T-cell (primary cell): ENCODE measurements at regions of chr12 and their contacts with region 1.

Region 1: GRCh38 chr12:40921563-40922163 is 229.4 kb downstream of the CNTN1 start:
- DNase-seq: no peak
- ATAC-seq: no peak
- H3K4me3 ChIP-seq: no peak overlapping the region
- H3K4me3 Mint-ChIP-seq: no peak overlapping the region
- H3K27ac ChIP-seq: no peak overlapping the region
- H3K27ac Mint-ChIP-seq: no peak overlapping the region
- H3K4me1 ChIP-seq: no peaks in the 10 kb centered on the region
- H3K4me1 Mint-ChIP-seq: no peaks in the 10 kb centered on the region
- H3K27me3 ChIP-seq: no peaks in the 10 kb centered on the region
- H3K27me3 Mint-ChIP-seq: peaks cover 3 to 7% of the 10 kb centered on the region in 2 donors

Region 2: DNA sequence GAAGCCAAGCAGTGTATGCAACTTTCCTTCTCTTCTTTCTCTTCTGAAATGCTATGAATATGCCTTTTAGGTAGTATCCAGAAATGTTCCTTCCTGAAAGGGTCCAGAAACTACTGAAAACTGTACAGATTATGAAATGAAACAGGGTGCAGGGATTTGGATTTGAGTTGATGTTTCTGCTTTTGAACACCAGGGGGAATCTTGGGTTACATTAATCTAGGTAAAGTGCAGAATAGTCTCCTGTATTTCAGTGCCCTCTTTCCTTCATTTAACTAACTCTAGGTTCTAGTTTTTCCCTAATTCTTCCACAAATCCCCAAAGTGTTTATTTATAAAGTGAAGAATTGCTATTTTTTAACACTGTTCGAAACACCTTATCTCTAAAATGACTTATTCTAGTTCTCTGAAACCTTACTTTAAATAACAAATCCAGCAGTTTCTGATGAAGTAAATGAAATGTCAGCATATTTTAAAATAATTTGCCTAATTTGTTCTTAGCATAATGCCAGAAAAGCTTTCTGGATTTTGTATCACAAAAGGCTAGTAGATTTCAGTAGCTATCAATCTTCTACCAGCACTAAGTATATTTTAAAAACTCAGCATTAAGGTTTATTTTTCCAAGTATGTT is 585.0 kb before region 1 on chr12:
- CTCF ChIA-PET with region 1: interaction called in 1 of 2 experiments, 13 read pairs
- POLR2A ChIA-PET with region 1: no interaction called
- DNase-seq: no peak
- ATAC-seq: no peak
- H3K4me3 ChIP-seq: no peak overlapping the region
- H3K4me3 Mint-ChIP-seq: no peak overlapping the region
- H3K27ac ChIP-seq: no peak overlapping the region
- H3K27ac Mint-ChIP-seq: no peak overlapping the region
- H3K4me1 ChIP-seq: no peaks in the 10 kb centered on the region
- H3K4me1 Mint-ChIP-seq: no peaks in the 10 kb centered on the region
- H3K27me3 ChIP-seq: no peaks in the 10 kb centered on the region
- H3K27me3 Mint-ChIP-seq: no peaks in the 10 kb centered on the region

Region 3: GRCh38 chr12:41193311-41193710 is 271.6 kb after region 1 on chr12:
- CTCF ChIA-PET with region 1: no interaction called
- POLR2A ChIA-PET with region 1: no interaction called
- DNase-seq: no peak
- ATAC-seq: no peak
- H3K4me3 ChIP-seq: no peak overlapping the region
- H3K4me3 Mint-ChIP-seq: no peak overlapping the region
- H3K27ac ChIP-seq: no peak overlapping the region
- H3K27ac Mint-ChIP-seq: no peak overlapping the region
- H3K4me1 ChIP-seq: no peaks in the 10 kb centered on the region
- H3K4me1 Mint-ChIP-seq: peaks cover 0 to 10% (median 8%) of the 10 kb centered on the region in 3 donors
- H3K27me3 ChIP-seq: peaks cover 3 to 20% of the 10 kb centered on the region in 2 experiments
- H3K27me3 Mint-ChIP-seq: peaks cover 18 to 19% of the 10 kb centered on the region in 2 donors